ENCODE measurements at regions of chr5 and their contacts with region 1.

Region 1: DNA sequence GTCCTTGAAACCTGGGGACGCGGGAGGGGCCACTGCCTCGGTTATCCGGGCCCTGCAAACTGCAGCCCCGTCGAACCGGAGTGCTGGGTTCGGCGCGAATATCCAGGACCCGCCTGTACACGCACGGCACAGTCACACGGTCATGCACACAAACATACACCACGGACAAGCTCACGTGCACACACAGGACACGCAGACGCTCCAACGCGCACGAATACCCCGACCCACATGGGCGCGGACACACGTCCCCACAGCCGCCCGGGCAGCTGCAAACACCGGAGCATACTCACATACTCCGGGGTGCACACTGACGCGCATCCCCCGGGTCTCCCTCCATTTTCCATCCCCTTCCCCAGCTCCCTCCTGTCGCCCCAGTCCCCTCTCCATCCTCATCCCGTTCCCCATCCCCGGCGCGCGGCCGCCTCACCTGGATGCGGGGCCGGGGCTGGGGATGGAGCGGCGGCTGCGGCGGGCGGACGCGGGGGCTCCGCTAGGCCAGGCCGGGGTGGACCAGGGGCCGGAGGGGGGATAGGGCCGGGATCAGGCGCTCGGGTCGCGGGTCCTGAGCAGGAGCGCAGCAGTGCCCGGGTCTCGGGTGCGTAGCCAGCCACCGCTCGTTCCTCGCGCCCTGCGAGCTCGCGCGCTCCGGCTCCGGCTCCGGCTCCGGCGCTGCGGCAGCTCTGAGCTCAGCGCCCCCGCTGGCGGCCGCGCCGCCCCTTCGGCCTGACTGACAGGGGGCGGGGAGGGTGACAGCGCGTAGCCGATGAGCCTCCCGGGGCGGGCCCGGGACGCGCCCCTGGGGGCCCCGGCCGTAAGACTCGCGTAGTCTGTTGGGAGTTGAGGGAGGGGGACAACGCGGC is at the starts of genes EIF4E1B and SNCB:
- DNase-seq: peak; percentile 68
- H3K4me3 ChIP-seq: peak within 1 kb of the TSS; percentile 26 to 52
- H3K27ac ChIP-seq: no peak within 1 kb of the TSS
- H3K4me1 ChIP-seq: peaks cover 9% of the 10 kb centered on the region
- H3K27me3 ChIP-seq: no peaks in the 10 kb centered on the region
- CTCF ChIP-seq: no peak
- POLR2A ChIP-seq: no peak
- total RNA-seq, gene EIF4E1B: 0.99 to 2.4 TPM
- total RNA-seq, gene SNCB: 0.31 to 0.74 TPM

Region 2: DNA sequence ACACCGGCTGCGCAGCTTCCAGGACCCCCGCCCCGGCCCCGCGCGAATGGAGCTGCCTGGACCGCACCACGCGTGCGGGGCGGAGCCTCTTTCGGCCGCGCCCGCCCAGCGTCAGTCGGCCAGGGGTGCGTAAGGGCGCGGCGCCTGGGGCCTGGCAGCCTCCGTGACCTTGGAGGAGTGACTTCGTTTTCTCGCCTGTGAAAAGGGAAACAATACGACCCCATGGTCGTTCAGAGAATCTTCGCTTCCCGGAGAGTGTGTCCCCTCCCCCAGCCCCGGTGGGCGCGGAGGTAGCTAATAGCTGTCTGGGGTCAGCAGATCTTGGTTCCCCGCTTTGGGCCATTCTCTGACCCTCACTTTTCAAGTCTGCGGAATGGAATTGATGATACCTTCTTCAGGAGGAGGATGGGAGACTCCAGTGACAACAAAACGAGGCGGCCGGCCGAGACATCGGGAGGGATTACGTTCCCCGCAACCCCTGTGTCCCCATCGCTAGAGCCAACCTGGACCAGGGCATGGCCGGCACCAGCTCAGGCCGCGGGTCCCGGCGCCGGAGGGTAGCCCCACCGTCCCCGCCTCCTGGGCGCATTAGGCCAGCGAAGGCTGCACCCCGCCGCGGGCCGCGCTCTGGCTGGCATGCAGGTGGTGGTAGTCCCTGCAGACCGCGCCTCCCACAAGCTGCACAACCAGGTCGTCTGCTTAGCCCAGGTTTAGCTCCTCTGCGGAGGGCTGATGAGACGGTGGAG is 86.5 kb before region 1 on chr5:
- intact Hi-C with region 1: loop called (anchors 10 kb)
- DNase-seq: peak; percentile 72
- H3K4me3 ChIP-seq: peak overlapping the region; percentile 59 to 73
- H3K27ac ChIP-seq: peak overlapping the region; percentile 58 to 71
- H3K4me1 ChIP-seq: peaks cover 13% of the 10 kb centered on the region
- H3K27me3 ChIP-seq: no peaks in the 10 kb centered on the region
- CTCF ChIP-seq: no peak
- POLR2A ChIP-seq: no peak

Measured in testis (tissue), 5 donors.